ENCODE measurements at regions of chr7 and their contacts with region 1.

Region 1: GRCh38 chr7:18570890-18571478 is 75.4 kb downstream of the HDAC9 start:
- DNase-seq: peak; percentile 39
- H3K4me3 ChIP-seq: no peak overlapping the region
- H3K27ac ChIP-seq: peak overlapping the region; percentile 23
- H3K4me1 ChIP-seq: peaks cover 93% of the 10 kb centered on the region
- CTCF ChIP-seq: peak; percentile 86

Region 2: DNA sequence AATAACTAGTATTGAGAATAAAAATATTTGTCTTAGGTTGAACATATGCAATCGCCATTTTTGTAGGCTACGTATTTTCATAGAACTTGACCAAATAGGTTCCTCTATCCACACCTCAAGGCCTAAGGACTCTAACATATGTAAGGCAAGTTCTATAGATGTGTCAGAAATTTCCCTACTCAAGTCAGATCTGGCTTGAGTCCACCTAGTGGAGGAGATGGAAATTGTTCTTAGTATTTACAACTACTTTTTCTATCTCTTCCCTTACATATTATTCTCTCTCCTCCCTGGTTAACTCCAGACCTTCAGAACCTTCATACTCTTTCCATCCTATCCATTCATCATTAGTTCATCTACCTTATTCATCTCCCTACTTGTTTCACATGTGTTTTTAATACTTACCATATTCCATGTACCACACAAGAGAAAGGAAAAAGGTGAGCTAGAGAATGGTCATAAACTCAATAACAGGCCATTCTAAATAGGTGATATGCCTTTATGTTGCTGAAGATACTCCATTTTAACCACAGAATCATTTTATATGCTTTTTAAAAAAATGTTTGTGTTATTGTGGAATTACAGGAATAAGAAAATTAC is 249.9 kb before region 1 on chr7:
- CTCF ChIA-PET with region 1: no interaction called
- POLR2A ChIA-PET with region 1: interaction called, 10 read pairs
- intact Hi-C with region 1: no loop called
- DNase-seq: peak; percentile 47
- H3K4me3 ChIP-seq: no peak overlapping the region
- H3K27ac ChIP-seq: no peak overlapping the region
- H3K4me1 ChIP-seq: no peaks in the 10 kb centered on the region
- CTCF ChIP-seq: peak; percentile 80

Region 3: DNA sequence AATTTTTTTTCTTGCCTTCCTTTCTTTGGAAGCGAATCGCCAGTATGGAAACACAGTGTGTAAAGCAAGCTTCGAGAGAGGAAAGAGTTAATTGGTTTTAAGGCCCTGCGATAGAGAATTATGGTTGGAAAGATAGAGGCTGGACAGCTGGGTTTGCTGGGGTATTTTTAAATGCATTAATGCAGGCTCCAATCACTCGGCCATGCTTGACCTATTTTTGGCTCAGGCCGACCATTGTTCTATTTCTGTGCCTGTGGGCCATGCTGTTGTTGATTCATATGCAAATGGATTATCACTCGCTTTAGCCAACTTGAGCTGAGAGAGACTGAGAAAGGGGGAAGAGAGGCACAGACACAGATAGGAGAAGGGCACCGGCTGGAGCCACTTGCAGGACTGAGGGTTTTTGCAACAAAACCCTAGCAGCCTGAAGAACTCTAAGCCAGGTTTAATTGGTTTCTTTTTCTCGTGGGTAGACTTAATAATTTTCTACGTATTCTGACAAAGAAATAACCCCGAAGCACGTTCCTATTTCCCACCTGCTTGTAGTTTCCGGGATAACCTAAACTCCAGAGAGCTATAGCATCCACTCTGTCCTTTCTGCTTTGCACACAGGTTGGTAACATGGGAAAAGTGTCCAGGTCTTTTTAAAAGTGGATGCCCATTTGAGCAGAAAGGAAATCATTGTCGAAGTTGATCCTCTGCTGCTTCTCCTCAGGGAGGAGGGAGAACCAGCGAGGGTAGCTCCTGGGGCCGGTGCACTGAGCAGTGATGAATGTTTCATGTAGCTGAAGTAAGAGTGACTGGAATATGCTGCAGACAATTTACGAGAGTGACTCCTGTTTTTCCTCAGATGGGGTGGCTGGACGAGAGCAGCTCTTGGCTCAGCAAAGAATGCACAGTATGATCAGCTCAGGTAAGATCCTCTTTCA is 75.3 kb before region 1 on chr7 and contains the start of gene HDAC9:
- CTCF ChIA-PET with region 1: interaction called, 4 read pairs
- POLR2A ChIA-PET with region 1: interaction called, 119 read pairs
- intact Hi-C with region 1: loop called (anchors 1 kb)
- DNase-seq: peak; percentile 92
- H3K4me3 ChIP-seq: peak within 1 kb of the TSS; percentile 85
- H3K27ac ChIP-seq: peak within 1 kb of the TSS; percentile 79
- H3K4me1 ChIP-seq: peaks cover 29% of the 10 kb centered on the region
- CTCF ChIP-seq: no peak
- total RNA-seq, gene HDAC9: 90.3 and 91.7 TPM in 2 replicates

Region 4: GRCh38 chr7:18520450-18521235 is 50.3 kb before region 1 on chr7:
- CTCF ChIA-PET with region 1: no interaction called
- POLR2A ChIA-PET with region 1: interaction called, 80 read pairs
- intact Hi-C with region 1: loop called (anchors 2 kb)
- DNase-seq: peak; percentile 87
- H3K4me3 ChIP-seq: peak overlapping the region; percentile 65
- H3K27ac ChIP-seq: peak overlapping the region; percentile 99
- H3K4me1 ChIP-seq: peaks cover 99% of the 10 kb centered on the region
- CTCF ChIP-seq: no peak

Region 5: DNA sequence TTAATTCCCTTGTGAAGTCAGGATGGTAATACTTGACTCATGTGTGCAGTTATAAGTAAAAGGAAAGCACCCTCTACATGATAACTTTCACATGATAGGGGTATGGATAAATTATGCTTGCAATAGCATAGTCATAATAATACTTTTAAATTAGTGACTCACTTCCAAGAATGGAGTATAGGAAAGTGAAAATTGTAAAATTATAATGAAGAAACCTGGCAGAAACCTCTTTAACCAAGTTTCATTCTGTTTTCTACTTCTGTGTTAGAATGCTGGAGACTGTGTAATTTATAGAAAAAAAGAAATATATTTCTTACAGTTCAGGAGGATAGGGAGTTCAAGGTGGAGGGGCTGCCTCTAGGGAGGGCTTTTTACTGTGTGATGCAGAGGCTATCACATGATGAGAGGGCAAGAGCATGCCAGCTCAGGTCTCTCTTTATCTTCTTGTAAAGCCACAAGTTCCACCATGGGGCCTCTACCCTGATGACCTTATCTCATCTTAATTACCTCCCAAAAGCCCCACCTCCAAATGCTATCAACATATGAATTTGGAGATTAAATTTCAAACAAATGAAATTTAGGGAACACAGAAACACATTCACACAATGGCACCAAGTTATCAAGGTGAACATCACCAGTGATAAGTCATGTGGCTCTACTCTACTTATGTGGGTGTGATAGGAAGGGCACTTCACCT is 32.3 kb before region 1 on chr7:
- CTCF ChIA-PET with region 1: no interaction called
- POLR2A ChIA-PET with region 1: interaction called, 28 read pairs
- intact Hi-C with region 1: loop called (anchors 1 kb)
- DNase-seq: no peak
- H3K4me3 ChIP-seq: no peak overlapping the region
- H3K27ac ChIP-seq: no peak overlapping the region
- H3K4me1 ChIP-seq: peaks cover 62% of the 10 kb centered on the region
- CTCF ChIP-seq: no peak

Region 6: DNA sequence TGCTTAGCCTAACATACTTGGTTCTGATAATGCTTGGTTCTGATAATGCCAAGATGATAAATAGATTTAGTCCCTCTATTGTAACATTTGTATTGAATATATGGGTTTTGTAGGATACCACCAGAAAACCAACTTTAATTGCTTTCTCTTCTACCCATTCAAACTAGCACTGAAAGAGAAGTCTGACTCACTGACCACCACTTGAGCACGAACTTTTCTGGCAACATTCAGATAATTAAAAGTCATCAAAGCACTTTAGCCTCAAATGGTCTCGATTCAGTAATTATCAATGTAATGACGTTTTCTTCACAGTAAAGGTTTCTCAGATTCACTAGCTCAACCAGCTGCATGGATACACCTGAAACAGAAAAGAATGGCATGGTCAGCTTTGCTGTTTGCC is 12.5 kb before region 1 on chr7:
- CTCF ChIA-PET with region 1: no interaction called
- POLR2A ChIA-PET with region 1: interaction called, 13 read pairs
- intact Hi-C with region 1: no loop called
- DNase-seq: no peak
- H3K4me3 ChIP-seq: no peak overlapping the region
- H3K27ac ChIP-seq: no peak overlapping the region
- H3K4me1 ChIP-seq: peaks cover 16% of the 10 kb centered on the region
- CTCF ChIP-seq: no peak

Region 7: DNA sequence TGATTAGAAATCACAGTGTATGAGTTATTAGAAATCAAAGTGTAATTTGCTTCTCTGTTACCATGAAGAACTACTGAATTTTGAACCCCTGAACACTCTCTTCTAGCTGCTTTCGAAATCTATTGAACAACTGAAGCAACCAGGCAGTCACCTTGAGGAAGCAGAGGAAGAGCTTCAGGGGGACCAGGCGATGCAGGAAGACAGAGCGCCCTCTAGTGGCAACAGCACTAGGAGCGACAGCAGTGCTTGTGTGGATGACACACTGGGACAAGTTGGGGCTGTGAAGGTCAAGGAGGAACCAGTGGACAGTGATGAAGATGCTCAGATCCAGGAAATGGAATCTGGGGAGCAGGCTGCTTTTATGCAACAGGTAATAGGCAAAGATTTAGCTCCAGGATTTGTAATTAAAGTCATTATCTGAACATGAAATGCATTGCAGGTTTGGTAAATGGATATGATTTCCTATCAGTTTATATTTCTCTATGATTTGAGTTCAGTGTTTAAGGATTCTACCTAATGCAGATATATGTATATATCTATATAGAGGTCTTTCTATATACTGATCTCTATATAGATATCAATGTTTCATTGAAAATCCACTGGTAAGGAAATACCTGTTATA is 95.2 kb after region 1 on chr7:
- CTCF ChIA-PET with region 1: no interaction called
- POLR2A ChIA-PET with region 1: no interaction called
- intact Hi-C with region 1: no loop called
- DNase-seq: peak; percentile 85
- H3K4me3 ChIP-seq: no peak overlapping the region
- H3K27ac ChIP-seq: no peak overlapping the region
- H3K4me1 ChIP-seq: peaks cover 11% of the 10 kb centered on the region
- CTCF ChIP-seq: peak; percentile 100